Heart left ventricle (tissue), 16 donors: ENCODE measurements at regions of chr18 and their contacts with region 1.

Region 1: DNA sequence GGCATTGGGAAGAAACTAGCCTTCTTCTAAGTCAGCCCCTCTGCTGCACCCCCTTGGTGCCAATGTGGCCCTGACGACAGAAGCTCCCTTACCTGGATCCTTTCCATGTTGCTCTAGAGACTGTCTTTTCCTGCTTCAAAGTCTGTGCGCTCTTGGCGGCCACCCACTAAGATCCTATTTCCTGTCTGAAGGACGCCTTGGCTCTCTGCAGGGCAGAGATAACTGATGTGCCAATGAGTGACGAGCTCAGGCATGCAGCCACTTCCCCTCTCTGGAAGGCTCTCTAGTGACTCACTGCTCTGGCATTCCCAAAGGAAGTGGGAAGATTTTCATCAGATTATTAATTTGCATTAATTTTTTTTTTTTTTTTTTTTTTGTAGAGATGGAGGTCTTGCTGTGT is 273.5 kb downstream of the CDH20 start:
- DNase-seq: peak; percentile 72 to 91 (median 80)
- ATAC-seq: peak; percentile 94 to 96 (median 94)
- H3K4me3 ChIP-seq: peak overlapping the region in 11 of 12 donors; percentile 25 to 57 (median 50)
- H3K27ac ChIP-seq: peak overlapping the region; percentile 71 to 85 (median 80)
- H3K4me1 ChIP-seq: peaks cover 0 to 41% (median 20%) of the 10 kb centered on the region in 12 donors
- H3K27me3 ChIP-seq: no peaks in the 10 kb centered on the region
- CTCF ChIP-seq: peak in 1 of 12 donors; percentile 15
- POLR2A ChIP-seq: no peak

Region 2: DNA sequence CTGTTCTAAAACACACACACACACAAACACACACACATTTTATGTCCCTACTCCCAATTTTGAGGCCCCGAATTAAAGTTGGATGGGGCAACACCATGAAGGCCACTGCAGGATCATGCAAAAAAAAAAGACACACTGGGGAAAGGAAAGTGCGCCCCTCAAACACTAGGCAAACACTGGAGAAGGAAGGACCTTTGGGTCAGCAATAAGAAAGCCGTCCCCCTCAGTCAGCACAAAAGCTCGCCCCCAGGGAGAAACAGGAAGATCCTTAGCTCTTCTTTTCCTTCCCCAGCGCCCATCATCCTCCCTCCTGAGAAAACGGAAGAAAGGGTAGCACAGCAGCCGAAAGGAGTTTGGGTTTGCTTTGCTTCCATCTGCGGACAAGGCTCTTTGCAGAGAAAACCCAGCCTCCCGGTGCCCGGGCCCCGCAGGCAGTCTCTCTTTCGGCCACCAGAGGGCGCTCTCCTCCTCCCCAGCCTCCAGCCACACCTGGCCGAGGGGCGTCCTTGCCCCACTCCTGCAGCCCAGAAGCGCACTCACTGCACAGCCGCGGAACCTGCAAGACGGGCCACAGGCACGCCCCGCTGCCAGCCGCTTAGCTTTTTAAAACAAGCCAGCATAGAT is 25.1 kb before region 1 on chr18:
- intact Hi-C with region 1: loop called in 2 of 10 experiments (anchors 1 to 2 kb)
- DNase-seq: peak; percentile 73 to 88 (median 75)
- ATAC-seq: peak; percentile 83 to 93 (median 90)
- H3K4me3 ChIP-seq: peak overlapping the region in 11 of 12 donors; percentile 28 to 58 (median 49)
- H3K27ac ChIP-seq: peak overlapping the region in 11 of 12 donors; percentile 55 to 84 (median 71)
- H3K4me1 ChIP-seq: peaks cover 0 to 40% (median 16%) of the 10 kb centered on the region in 12 donors
- H3K27me3 ChIP-seq: no peaks in the 10 kb centered on the region
- CTCF ChIP-seq: peak; percentile 99 to 100 (median 99)
- POLR2A ChIP-seq: no peak